Caco-2 (cell line): ENCODE measurements at regions of chr13 and their contacts with region 1.

Region 1: DNA sequence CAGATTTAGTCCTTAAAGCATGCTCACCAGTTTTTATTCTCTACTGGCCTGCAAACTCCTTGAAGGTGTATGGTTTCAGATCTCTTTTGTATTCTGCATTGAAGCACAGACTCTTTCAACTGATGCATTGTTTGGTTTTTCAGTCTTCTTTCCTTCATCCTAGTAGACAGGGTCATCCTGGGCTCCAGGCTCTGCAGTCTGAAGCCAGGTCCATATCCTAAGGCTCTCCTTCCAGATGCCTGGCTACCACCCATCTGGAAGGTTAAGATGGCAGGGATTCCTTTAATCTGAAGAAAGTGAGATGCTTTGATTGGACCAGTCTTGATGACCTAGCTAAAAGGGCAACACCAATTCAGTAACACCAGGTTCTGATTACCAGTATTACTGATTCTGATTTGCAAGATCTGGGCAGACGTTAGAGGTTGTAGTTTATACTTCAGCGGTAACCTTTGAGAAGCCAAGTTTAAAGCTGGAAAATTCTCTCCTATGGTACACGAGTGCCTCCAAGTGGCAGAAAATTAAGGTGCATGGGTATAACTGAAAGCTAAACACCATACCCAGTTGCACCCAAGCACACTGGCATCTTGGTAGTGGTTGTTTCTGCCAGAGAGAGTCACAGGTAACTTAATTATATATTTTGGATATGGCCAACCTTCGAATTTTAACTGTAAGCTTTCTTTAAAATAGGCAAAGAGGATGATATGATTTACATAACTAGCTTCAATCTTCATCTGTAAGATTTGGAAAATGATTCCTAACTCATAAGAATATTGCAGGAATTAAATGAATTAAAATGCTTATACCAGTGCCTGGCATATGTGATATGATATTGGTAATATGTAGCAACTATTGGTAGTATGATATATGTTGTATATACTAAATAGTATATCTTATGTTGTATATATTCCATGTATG is 1651.9 kb upstream of the MIR17HG start:
- DNase-seq: peak; percentile 45 to 71
- H3K4me3 ChIP-seq: no peak overlapping the region
- H3K4me3 Mint-ChIP-seq: no peak overlapping the region
- H3K27ac Mint-ChIP-seq: no peak overlapping the region
- H3K4me1 ChIP-seq: no peaks in the 10 kb centered on the region
- H3K4me1 Mint-ChIP-seq: no peaks in the 10 kb centered on the region
- H3K27me3 ChIP-seq: no peaks in the 10 kb centered on the region
- H3K27me3 Mint-ChIP-seq: no peaks in the 10 kb centered on the region
- CTCF ChIP-seq: peak; percentile 81 to 84

Region 2: DNA sequence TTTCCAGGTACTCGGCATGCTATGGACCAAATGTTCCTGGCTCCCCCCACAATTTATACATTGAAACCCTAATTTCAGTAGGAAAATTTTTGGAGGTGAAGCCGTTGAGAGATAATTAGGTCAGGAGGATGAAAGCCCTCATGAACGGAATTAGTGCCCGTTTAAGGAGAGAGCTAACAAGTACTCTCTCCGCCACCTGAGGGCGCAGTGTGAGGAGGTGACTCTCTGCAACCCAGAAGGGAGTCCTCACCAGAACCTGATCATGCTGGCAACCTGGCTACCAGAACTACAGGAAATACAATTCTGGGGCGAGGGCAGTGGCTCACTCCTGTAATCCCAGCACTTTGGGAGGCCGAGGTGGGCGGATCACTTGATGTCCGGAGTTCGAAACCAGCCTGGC is 1626.6 kb before region 1 on chr13:
- CTCF ChIA-PET with region 1: interaction called, 7 read pairs
- POLR2A ChIA-PET with region 1: no interaction called
- intact Hi-C with region 1: loop called (anchors 2 kb)
- DNase-seq: peak; percentile 54 to 57
- H3K4me3 ChIP-seq: no peak overlapping the region
- H3K4me3 Mint-ChIP-seq: no peak overlapping the region
- H3K27ac Mint-ChIP-seq: no peak overlapping the region
- H3K4me1 ChIP-seq: no peaks in the 10 kb centered on the region
- H3K4me1 Mint-ChIP-seq: no peaks in the 10 kb centered on the region
- H3K27me3 ChIP-seq: no peaks in the 10 kb centered on the region
- H3K27me3 Mint-ChIP-seq: no peaks in the 10 kb centered on the region
- CTCF ChIP-seq: peak; percentile 17 to 34

Region 3: GRCh38 chr13:88887045-88887662 is 808.4 kb before region 1 on chr13:
- CTCF ChIA-PET with region 1: no interaction called
- POLR2A ChIA-PET with region 1: no interaction called
- intact Hi-C with region 1: loop called (anchors 10 kb)
- DNase-seq: peak in 1 of 2 experiments; percentile 7
- H3K4me3 ChIP-seq: no peak overlapping the region
- H3K4me3 Mint-ChIP-seq: no peak overlapping the region
- H3K27ac Mint-ChIP-seq: no peak overlapping the region
- H3K4me1 ChIP-seq: no peaks in the 10 kb centered on the region
- H3K4me1 Mint-ChIP-seq: no peaks in the 10 kb centered on the region
- H3K27me3 ChIP-seq: no peaks in the 10 kb centered on the region
- H3K27me3 Mint-ChIP-seq: no peaks in the 10 kb centered on the region
- CTCF ChIP-seq: peak in 1 of 2 experiments; percentile 42

Region 4: DNA sequence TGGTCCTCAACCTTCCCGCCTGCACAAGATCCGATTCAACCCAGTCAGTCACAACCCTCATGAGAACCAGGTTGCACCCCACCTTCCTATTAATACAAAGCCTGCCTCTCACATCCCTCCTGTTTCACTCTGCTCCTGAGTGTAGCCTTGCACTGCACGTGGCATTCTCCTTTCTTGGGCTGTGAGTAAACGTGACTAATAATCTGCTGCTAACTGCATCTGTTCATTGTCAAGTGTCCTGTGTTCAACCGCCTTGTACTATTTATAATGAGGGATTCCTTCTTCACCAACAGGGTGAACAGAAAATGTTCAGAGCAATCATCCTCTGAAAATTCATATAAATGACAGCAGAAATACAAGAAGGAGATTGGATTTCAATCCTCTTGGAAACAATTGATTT is 416.2 kb before region 1 on chr13:
- CTCF ChIA-PET with region 1: no interaction called
- POLR2A ChIA-PET with region 1: no interaction called
- intact Hi-C with region 1: loop called (anchors 10 kb)
- DNase-seq: no peak
- H3K4me3 ChIP-seq: no peak overlapping the region
- H3K4me3 Mint-ChIP-seq: no peak overlapping the region
- H3K27ac Mint-ChIP-seq: no peak overlapping the region
- H3K4me1 ChIP-seq: no peaks in the 10 kb centered on the region
- H3K4me1 Mint-ChIP-seq: no peaks in the 10 kb centered on the region
- H3K27me3 ChIP-seq: no peaks in the 10 kb centered on the region
- H3K27me3 Mint-ChIP-seq: no peaks in the 10 kb centered on the region
- CTCF ChIP-seq: no peak

Region 5: GRCh38 chr13:89432997-89433396 is 262.6 kb before region 1 on chr13:
- CTCF ChIA-PET with region 1: interaction called, 24 read pairs
- POLR2A ChIA-PET with region 1: no interaction called
- intact Hi-C with region 1: loop called (anchors 1 kb)
- DNase-seq: no peak
- H3K4me3 ChIP-seq: no peak overlapping the region
- H3K4me3 Mint-ChIP-seq: peak overlapping the region; percentile 54
- H3K27ac Mint-ChIP-seq: peak overlapping the region; percentile 76
- H3K4me1 ChIP-seq: peaks cover 3% of the 10 kb centered on the region; the same call in 1 of the 2 replicates
- H3K4me1 Mint-ChIP-seq: peaks cover 11% of the 10 kb centered on the region
- H3K27me3 ChIP-seq: no peaks in the 10 kb centered on the region
- H3K27me3 Mint-ChIP-seq: no peaks in the 10 kb centered on the region
- CTCF ChIP-seq: no peak

Region 6: GRCh38 chr13:89755729-89756492 is 60.3 kb after region 1 on chr13:
- CTCF ChIA-PET with region 1: no interaction called
- POLR2A ChIA-PET with region 1: no interaction called
- intact Hi-C with region 1: no loop called
- DNase-seq: no peak
- H3K4me3 ChIP-seq: no peak overlapping the region
- H3K4me3 Mint-ChIP-seq: no peak overlapping the region
- H3K27ac Mint-ChIP-seq: no peak overlapping the region
- H3K4me1 ChIP-seq: no peaks in the 10 kb centered on the region
- H3K4me1 Mint-ChIP-seq: no peaks in the 10 kb centered on the region
- H3K27me3 ChIP-seq: no peaks in the 10 kb centered on the region
- H3K27me3 Mint-ChIP-seq: peaks cover 2% of the 10 kb centered on the region
- CTCF ChIP-seq: no peak